ENCODE measurements at regions of chr6 and their contacts with region 1.

Region 1: GRCh38 chr6:1619673-1620503 is 10.2 kb downstream of the FOXC1 start:
- DNase-seq: peak; percentile 75 to 86
- ATAC-seq: peak; percentile 47
- H3K4me3 ChIP-seq: peak overlapping the region; percentile 61 to 100
- H3K27ac ChIP-seq: peak overlapping the region; percentile 99
- H3K4me1 ChIP-seq: no peaks in the 10 kb centered on the region
- H3K27me3 ChIP-seq: no peaks in the 10 kb centered on the region

Region 2: DNA sequence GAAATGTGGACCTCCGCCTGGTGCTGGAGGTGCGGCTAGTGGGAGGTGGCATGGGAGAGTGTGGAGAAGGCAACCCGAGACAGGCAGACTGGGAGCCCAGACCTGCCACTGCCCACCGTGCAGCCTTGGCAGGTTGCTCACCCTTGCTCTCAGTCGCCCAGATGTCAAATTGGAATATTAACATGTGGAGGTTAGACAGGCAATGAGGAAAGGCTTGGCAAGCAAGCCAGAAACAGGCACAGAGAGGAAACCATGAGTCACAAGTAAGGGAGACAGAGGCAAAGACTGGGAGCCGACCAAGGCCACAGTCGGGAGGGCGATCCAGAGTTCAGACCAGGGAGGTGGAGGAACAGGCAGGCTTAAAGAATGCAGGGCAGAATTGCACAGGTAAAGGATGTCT is 168.0 kb after region 1 on chr6:
- intact Hi-C with region 1: no loop called
- DNase-seq: peak; percentile 77 to 83
- ATAC-seq: peak; percentile 84
- H3K4me3 ChIP-seq: no peak overlapping the region
- H3K27ac ChIP-seq: peak overlapping the region in 1 of 2 donors; percentile 27
- H3K4me1 ChIP-seq: peaks cover 0 to 3% of the 10 kb centered on the region in 2 donors
- H3K27me3 ChIP-seq: no peaks in the 10 kb centered on the region

Region 3: GRCh38 chr6:1872649-1873131 is 252.8 kb after region 1 on chr6:
- intact Hi-C with region 1: loop called in 1 of 2 experiments (anchors 5 kb)
- DNase-seq: no peak
- ATAC-seq: peak; percentile 20
- H3K4me3 ChIP-seq: no peak overlapping the region
- H3K27ac ChIP-seq: peak overlapping the region; percentile 71 to 85
- H3K4me1 ChIP-seq: peaks cover 5 to 7% of the 10 kb centered on the region in 2 donors
- H3K27me3 ChIP-seq: no peaks in the 10 kb centered on the region

Region 4: DNA sequence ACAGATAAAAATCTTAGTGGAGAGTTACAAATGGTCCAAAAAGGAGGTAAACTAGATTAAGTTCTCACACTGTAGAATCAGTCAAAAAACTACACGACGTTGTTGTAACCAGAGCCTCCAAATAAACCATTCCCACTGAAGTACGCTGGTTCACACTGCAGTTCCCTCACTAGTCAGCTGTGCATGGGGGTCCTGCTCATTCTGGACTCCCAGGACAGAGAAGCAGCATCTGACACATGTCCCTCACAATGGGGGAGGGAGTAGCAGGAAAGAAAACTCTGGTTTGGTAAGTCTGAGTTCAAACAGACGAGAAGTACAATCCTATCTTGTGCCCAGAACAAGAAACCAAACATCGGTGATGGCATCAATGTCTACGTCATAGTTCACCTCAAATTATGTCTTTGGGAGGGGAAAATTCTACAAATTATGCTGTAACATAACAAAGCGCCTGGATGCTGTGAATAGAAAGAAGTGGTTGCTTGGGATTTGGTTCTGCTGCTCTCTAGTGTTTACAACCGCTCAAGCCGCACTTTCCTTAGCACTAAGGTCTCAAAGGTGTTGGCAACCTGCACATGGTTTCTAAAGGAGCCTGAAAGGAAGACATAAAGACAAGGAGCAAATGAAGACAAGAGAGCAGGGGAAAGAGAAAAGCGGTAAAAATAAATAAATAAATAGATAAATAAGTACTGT is 417.5 kb after region 1 on chr6:
- intact Hi-C with region 1: loop called (anchors 2 to 5 kb)
- DNase-seq: no peak
- ATAC-seq: no peak
- H3K4me3 ChIP-seq: no peak overlapping the region
- H3K27ac ChIP-seq: peak overlapping the region in 1 of 2 donors; percentile 40
- H3K4me1 ChIP-seq: no peaks in the 10 kb centered on the region
- H3K27me3 ChIP-seq: no peaks in the 10 kb centered on the region

Region 5: DNA sequence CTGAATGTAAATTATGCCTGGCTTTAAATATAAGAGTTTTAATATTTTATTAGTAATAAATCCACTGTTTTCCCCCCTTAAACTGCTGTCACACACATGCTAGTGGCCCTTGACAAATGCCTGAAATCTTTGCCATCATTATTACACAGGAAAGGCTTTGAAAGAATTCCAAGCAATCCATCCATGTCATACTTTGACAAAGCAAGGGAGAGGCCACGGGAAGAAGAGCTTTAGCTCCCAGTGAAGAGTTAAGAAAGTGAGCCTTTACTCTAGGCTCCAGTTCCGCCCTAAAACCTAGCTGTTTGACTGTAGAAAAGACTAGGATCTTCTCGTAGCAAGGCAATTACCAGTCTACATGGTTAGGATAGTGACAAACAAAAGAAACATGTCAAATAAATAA is 477.6 kb after region 1 on chr6:
- intact Hi-C with region 1: loop called (anchors 2 kb)
- DNase-seq: no peak
- ATAC-seq: no peak
- H3K4me3 ChIP-seq: peak overlapping the region; percentile 31 to 48
- H3K27ac ChIP-seq: peak overlapping the region; percentile 47 to 76
- H3K4me1 ChIP-seq: peaks cover 0 to 2% of the 10 kb centered on the region in 2 donors
- H3K27me3 ChIP-seq: no peaks in the 10 kb centered on the region

Region 6: GRCh38 chr6:2103644-2104523 is 484.0 kb after region 1 on chr6:
- intact Hi-C with region 1: loop called (anchors 2 kb)
- DNase-seq: peak in 1 of 2 donors; percentile 63
- ATAC-seq: peak; percentile 87
- H3K4me3 ChIP-seq: peak overlapping the region; percentile 61 to 94
- H3K27ac ChIP-seq: peak overlapping the region; percentile 84 to 90
- H3K4me1 ChIP-seq: no peaks in the 10 kb centered on the region
- H3K27me3 ChIP-seq: no peaks in the 10 kb centered on the region

Measured in aorta (tissue), 5 donors.